Lower leg skin (tissue), 4 donors: ENCODE measurements at regions of chr4 and their contacts with region 1.

Region 1: GRCh38 chr4:105014635-105015034 is 132.0 kb upstream of the TET2 start:
- DNase-seq: no peak
- H3K4me3 ChIP-seq: no peak overlapping the region
- CTCF ChIP-seq: no peak
- POLR2A ChIP-seq: no peak

Region 2: DNA sequence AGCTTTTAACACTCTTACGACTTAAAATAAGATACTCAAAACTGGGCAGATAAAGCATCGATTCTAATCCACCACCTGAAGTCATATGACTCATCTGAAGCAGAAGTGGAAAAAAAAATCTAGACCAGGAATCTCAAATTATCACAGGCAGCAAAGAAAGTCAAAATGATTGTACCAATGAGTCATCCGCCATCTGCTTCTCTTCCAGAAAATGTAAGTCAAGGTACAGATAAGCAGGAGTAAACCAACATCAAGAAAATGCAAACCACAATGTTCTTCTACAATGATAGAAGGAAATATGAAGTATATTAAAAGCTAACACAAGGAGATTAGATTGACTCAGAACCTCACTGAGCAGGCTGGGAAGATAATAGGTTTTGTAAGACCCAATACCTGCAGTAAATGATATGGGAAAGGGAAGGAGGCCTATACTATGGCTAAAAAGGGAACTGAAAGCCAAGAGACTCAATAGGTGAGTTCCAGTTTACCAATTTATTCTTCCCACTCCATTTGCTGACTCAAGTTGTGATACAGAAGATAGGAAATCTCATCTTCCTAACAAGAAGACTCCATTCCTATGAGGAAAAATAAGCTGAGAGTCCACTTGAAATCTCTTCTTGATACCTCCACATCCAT is 43.7 kb after region 1 on chr4:
- intact Hi-C with region 1: loop called (anchors 1 kb)
- DNase-seq: no peak
- H3K4me3 ChIP-seq: no peak overlapping the region
- CTCF ChIP-seq: no peak
- POLR2A ChIP-seq: no peak